AG04450 (cell line): ENCODE measurements at regions of chr3 and their contacts with region 1.

Region 1: DNA sequence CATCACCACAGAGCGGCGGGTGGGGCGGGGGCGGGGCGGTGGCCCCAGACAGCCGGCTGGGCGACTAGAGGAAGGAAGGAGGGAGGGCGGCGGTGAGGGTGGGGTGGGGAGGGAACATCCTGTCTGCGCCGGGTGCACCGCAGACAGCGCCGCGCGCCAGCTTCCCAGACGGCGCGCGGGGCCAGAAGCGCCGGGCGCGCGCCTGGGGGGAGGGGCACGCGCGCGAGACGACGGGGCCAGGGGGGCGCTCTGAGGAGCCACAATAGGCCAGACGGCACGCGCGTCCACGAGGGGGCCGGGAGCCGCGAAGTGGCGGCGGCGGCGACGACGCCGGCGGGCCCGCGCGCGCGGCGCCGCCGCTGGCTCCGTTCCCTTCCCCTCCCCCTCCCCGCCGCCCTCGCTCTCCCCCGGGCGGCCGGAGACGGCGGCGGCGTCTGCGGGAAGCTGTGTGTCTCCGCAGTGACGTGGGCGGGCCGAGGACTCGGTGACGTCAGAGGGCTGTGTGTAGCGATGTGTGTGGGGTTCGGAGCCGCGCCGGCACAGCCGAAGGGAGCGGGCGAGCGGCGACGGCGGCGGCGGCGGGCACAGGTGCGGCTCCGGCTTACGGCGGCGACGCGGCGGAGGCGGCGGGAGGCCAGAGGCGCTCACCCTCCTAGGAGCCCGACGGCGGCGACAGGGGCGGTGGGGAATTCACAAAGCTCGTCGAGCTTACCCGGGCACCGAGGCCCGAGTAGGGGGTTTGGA is at the start of gene SKIL:
- DNase-seq: peak; percentile 89
- H3K4me3 ChIP-seq: peak within 1 kb of the TSS; percentile 81
- H3K27ac ChIP-seq: peak within 1 kb of the TSS; percentile 85
- H3K27me3 ChIP-seq: no peaks in the 10 kb centered on the region
- CTCF ChIP-seq: no peak
- polyA plus RNA-seq, gene SKIL: 14.7 and 18.3 TPM in 2 replicates

Region 2: GRCh38 chr3:170542704-170543103 is 185.4 kb after region 1 on chr3:
- CTCF ChIA-PET with region 1: no interaction called
- POLR2A ChIA-PET with region 1: no interaction called
- DNase-seq: no peak
- H3K4me3 ChIP-seq: no peak overlapping the region
- H3K27ac ChIP-seq: no peak overlapping the region
- H3K27me3 ChIP-seq: no peaks in the 10 kb centered on the region
- CTCF ChIP-seq: no peak

Region 3: GRCh38 chr3:171023566-171023965 is 666.2 kb after region 1 on chr3:
- CTCF ChIA-PET with region 1: interaction called, 11 read pairs
- POLR2A ChIA-PET with region 1: no interaction called
- DNase-seq: no peak
- H3K4me3 ChIP-seq: no peak overlapping the region
- H3K27ac ChIP-seq: no peak overlapping the region
- H3K27me3 ChIP-seq: no peaks in the 10 kb centered on the region
- CTCF ChIP-seq: no peak